ENCODE measurements at regions of chr4 and their contacts with region 1.

Region 1: DNA sequence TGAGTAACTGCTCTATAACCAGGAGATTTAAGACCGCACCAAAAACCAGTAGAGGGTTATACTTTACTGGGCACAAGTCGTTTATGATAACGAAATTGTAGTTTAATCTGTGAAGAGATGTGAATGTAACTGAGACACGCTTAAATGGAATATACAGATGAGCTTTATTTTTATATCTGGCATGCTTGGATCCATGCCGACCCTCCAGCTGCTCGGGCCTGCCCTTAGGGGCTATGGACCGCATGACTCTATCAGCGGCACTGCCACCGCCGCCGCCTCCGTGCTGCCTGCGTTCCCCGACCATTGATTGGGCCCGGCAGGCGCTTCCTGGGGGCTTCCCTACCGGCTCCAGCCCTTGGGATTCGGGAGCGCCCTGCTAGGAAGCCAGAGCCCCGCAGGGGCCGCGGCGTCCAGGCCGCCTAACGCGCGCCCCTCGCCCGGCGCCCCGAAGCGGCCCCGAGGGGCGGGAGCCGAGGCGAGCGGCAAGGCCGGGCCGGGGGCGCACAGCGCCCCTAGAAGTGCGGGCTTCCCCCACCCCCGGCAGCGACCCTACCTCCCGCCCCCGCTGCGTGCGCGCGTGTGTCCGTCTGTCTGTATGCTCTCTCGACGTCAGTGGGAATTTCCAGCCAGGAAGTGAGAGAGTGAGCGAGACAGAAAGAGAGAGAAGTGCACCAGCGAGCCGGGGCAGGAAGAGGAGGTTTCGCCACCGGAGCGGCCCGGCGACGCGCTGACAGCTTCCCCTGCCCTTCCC is at the start of gene NFKB1:
- DNase-seq: peak; percentile 88
- total RNA-seq, gene NFKB1: 28.7 TPM

Region 2: DNA sequence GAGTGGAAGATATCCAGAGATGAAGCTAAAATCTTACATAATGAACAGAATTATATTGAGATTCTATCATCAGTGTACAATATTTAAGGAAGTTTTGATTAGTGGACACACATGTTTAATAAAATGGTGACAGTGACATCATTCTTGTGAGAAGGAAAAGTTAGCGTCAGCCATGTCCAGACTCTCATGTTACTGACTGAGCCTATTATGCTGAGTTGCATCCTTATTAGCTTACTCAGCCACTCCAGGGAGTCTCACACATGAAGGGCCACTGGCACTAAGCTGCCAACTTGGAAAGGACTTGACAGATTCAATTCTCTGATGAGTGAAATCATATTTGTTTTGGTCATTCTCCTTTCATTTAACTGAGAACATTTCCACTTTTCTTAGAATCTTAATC is 539.7 kb before region 1 on chr4:
- intact Hi-C with region 1: no loop called
- DNase-seq: no peak

Region 3: GRCh38 chr4:102344954-102345794 is 155.7 kb before region 1 on chr4 and contains the start of gene SLC39A8:
- intact Hi-C with region 1: no loop called
- DNase-seq: peak; percentile 94
- total RNA-seq, gene SLC39A8: 3.0 TPM

Region 4: DNA sequence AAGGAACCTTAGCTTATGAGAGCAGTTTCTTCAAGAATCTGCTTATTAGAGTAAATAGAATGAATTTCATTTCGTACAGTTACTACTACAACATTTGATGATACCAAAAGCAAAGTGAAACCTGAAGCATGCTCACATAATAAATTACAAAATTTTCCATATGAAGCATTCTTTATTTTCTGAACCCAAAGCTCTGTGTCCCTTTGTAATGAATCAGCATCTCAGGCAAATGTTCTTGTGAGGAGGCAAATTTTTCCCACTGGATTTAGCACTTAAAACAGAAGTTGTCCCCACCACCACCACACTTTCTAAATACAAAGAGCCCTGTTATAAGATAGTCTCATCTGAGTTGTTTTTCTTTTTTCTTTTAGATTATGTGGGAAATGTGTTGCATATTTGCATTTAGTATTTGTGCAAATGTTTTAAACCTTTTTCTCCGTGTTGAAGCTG is 70.4 kb before region 1 on chr4:
- intact Hi-C with region 1: loop called (anchors 5 kb)
- DNase-seq: no peak

Region 5: DNA sequence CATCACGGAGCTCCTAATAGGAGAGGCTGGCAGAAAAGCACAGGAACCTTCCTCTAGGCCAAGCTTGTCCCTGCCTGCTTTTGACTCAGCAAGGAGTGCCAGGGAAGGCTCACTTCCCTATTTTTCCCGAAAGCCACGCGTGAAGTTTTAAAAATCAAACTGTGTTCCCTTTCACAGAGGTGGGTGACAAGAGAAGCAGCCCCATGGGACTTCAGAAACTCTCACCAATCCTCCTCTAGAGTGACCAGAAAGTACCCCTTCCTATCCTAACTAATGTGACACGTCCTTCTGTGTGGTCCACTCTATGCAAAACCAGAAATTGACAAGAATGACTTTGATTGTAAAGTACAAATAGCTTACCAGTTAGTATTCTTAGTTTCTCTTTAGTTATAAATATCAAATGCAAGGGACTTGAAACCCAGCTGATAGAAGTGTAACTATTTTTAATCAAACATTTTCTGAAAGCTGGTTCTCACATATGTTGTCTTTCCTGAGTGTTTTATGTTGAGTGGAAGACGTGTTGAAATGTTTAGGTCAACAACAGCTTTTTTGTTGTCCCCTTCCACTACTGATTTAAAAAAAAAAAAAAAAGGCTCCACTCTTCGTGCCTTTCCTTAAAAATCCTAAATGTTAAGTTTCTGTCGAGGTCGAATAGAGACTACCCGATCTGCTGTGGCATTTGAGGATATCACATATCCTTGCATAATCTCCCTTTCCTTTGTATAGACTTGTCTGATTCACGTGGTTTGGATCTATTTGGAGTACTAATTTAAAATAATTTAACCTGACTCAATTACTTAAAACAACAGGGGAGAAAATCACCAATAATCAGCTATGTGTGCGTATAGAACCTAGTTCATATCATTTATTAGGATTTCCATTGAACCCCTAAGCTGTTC is 42.4 kb after region 1 on chr4:
- intact Hi-C with region 1: loop called (anchors 5 kb)
- DNase-seq: no peak

Region 6: DNA sequence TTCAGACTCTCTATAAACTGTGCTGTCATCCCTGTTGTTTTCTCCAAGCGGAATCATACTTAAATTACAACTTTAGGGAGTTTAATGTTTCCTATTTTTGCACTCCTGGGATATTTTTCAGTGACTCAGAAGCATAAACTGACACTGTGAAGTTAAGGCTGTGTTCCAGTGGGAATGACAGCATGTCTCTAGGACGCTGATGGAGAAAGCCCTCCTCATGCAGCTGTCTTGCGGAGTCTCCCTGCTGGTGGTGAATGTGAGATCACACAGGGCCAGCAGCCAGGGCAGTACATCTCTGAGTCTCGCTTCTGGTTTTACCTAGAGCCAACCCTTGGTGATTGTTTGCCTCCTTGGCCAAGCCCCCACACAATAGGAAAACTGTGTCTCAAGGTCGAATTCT is 53.6 kb after region 1 on chr4:
- intact Hi-C with region 1: no loop called
- DNase-seq: no peak

Region 7: DNA sequence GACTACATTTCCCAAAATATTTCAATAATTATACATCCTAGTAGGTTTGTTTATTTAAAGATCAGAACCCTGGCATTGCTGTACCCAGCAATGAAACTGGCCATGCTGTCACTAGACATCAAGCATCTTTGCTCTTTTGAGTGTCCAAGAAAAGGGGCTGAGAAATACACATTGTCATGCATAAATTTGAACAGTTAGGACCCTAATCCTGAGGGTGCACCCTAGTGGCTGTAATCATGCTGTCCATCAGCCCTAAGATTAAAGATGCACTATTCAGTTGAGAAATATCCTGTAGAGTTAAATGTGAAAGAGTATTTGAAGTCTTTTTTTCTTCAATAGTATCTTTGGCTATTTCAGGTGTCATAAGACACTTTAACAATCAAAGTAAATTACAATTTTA is 109.1 kb after region 1 on chr4:
- intact Hi-C with region 1: loop called (anchors 5 kb)
- DNase-seq: no peak

Region 8: DNA sequence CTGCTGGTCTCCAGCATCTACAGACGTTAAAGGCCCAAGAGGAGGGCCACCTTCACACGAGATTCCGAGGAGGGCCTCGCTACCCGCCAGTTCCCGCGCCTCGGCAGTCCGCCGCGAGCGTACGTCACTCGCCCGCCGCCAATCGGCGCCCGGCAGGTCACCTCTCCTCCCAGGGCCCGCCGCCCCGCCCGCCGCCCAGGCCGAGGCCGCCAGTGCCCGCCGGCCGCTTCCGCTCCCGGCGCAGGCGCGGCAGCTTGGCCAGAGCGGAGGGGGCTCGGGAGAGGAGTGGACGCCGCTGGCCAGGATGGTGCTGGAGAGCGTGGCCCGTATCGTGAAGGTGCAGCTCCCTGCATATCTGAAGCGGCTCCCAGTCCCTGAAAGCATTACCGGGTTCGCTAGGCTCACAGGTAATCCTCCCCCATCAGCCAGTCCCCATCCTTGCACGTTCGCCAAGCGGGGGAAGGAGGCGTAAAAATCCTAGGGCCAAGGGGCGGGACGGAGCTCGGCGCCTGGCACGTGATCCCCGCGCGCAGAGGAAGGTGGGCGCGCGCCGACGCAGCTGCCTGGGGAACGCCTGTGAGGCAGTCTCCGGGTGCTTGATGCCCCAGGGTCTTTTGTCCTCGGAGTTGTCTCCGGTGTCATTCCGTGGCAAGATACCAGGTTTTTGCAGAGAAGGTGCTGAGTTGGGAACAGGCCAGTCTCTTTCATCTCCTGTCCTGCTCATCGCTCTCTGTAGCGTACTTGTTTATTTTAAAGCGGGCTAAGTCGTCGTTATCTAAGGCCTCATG is 368.1 kb after region 1 on chr4 and contains the start of gene CISD2:
- intact Hi-C with region 1: loop called (anchors 5 kb)
- DNase-seq: peak; percentile 97
- total RNA-seq, gene CISD2: 15.8 TPM

Measured in cardiac septum (tissue), 1 donor.